ENCODE measurements at regions of chr2 and their contacts with region 1.

Region 1: DNA sequence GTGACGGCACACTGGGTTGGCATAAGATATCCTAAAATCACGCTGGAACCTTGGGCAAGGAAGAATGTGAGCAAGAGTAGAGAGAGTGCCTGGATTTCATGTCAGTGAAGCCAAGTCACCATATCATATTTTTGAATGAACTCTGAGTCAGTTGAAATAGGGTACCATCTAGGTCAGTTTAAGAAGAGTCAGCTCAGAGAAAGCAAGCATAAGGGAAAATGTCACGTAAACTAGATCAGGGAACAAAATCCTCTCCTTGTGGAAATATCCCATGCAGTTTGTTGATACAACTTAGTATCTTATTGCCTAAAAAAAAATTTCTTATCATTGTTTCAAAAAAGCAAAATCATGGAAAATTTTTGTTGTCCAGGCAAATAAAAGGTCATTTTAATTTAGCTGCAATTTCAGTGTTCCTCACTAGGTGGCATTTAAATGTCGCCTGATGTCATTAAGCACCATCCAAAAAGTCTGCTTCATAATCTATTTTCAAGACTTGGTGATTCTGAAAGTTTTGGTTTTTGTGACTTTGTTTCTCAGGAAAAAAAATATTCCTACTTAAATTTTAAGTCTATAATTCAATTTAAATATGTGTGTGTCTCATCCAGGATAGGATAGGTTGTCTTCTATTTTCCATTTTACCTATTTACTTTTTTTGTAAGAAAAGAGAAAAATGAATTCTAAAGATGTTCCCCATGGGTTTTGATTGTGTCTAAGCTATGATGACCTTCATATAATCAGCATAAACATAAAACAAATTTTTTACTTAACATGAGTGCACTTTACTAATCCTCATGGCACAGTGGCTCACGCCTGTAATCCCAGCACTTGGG is 19.6 kb downstream of the RSAD2 start:
- DNase-seq: no peak
- H3K27ac ChIP-seq: no peak overlapping the region
- CTCF ChIP-seq: peak; percentile 64

Region 2: GRCh38 chr2:7044261-7045250 is 147.4 kb after region 1 on chr2:
- CTCF ChIA-PET with region 1: interaction called, 18 read pairs
- POLR2A ChIA-PET with region 1: no interaction called
- DNase-seq: peak; percentile 80
- H3K27ac ChIP-seq: no peak overlapping the region
- CTCF ChIP-seq: peak; percentile 81